Activated naive CD4-positive, alpha-beta T cell treated with anti-CD3 and anti-CD28 coated beads for 36 hours (primary cell): ENCODE measurements at regions of chr12 and their contacts with region 1.

Region 1: DNA sequence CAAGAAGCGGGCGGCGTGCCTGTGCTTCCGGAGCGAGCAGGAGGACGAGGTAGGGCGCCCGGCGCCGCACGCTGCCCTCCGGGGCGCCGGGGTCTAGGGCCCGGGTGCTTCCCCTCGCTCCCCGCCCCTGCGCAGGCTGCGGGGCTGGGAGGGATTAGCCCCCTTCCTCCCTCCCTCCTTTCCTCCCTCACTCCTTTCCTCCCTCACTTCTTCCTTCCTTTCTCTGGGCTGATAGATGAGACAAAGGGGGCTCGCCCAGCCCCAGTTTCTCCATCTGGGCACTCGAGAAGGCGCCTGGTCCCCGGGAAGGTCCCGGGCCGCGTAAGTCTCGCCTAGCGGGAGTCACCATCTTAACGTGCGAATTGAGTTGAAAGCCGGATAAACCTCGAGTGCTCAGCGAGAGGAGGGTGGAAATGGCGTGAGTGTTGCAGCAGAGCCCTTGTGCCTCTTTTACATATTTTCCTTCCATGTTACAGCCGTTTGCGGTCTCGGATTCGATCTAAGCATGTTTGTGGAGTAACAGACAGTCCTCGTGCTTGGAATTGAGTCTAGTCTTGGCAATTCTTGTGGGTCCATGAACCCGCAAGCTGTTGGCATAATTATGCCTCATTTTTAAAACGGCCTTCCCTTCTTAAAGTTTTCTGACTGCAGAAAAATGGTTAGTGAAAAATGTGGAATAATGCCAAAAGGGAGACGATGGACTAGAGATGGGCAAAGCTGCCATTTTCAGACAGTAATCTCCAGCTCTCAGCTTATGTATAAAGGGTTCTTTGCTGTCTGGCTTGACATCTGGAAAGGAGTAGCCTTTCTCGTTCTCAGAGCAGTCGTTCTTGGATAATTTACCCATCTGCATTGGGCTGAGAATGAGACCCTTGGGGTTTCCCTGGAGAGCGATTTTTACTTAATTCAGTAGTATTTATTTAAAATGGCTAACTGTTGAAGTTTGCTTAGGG is 924 bp downstream of the NUDT4 start:
- DNase-seq: peak; percentile 74
- H3K4me3 Mint-ChIP-seq: peak overlapping the region; percentile 99
- H3K27ac Mint-ChIP-seq: peak overlapping the region; percentile 99
- H3K4me1 Mint-ChIP-seq: peaks cover 38% of the 10 kb centered on the region
- H3K27me3 Mint-ChIP-seq: no peaks in the 10 kb centered on the region

Region 2: GRCh38 chr12:92312463-92312964 is 1066.1 kb before region 1 on chr12:
- CTCF ChIA-PET with region 1: no interaction called
- intact Hi-C with region 1: no loop called
- DNase-seq: no peak
- H3K4me3 Mint-ChIP-seq: no peak overlapping the region
- H3K27ac Mint-ChIP-seq: no peak overlapping the region
- H3K4me1 Mint-ChIP-seq: peaks cover 20% of the 10 kb centered on the region
- H3K27me3 Mint-ChIP-seq: no peaks in the 10 kb centered on the region

Region 3: DNA sequence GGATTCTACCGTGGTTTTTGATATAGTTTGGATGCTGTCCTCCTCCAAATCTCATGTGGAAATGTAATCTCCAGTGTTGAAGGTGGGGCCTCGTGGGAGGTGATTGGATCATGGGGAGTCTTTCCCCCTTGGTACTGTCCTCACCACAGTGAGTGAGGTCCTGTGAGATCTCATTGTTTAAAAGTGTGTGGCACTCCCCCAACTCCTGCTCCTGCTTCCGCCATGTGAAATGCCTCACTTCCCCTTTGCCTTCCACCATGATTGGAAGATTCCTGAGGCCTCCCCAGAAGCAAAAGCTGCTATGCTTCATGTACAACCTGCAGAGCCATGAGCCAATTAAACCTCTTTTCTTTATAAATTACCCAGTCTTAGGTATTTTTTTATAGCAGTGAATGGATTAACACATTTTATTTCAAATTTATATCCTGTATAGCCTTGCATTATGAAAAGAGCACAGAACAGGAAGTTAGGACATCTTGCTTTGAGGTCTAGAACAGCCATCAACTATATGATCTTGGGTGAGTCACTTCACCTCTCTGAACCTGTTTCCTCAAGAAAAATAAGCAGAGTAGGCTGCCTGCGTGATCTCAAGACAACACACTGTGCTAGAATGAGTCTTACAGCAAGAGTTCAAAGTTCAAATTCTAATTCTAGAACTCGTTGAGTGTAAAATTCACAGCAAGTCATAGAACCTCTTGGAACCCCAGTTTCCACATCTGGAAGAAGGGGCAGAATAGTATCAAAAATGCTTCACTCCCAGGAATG is 288.7 kb before region 1 on chr12:
- CTCF ChIA-PET with region 1: no interaction called
- intact Hi-C with region 1: loop called (anchors 1 kb)
- DNase-seq: peak; percentile 64
- H3K4me3 Mint-ChIP-seq: no peak overlapping the region
- H3K27ac Mint-ChIP-seq: peak overlapping the region; percentile 68
- H3K4me1 Mint-ChIP-seq: peaks cover 13% of the 10 kb centered on the region
- H3K27me3 Mint-ChIP-seq: no peaks in the 10 kb centered on the region

Region 4: DNA sequence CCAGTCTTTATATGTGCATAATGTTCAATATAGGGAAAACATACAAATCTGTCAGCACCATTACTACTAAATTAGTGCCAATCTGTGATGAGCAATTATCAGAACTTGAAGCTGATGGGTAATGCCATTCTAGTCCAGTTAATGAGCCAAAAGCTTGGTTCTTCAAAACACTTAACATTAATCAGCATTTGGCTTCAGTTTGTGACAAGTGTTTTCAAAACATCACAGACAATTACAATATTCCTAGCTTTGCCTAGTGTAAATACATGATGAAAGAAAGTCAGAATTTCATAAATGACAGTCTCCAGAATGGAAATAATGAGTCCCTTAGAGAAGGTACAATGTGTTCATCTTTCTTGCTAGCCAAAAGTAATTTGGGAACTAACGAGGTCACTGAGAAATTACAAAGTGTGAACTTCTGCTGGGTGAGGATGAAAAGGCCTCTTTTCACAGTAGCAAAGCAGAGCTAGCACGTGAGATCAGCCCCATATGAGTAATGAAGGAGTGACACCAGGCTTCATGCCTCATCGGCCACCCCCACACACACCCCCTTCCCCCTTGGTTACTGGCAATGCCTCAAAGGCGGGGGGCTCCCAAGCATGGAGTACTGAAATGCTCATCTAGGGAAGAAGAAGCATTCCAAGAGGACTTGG is 269.0 kb before region 1 on chr12:
- CTCF ChIA-PET with region 1: no interaction called
- intact Hi-C with region 1: loop called (anchors 1 kb)
- DNase-seq: peak; percentile 83
- H3K4me3 Mint-ChIP-seq: no peak overlapping the region
- H3K27ac Mint-ChIP-seq: peak overlapping the region; percentile 91
- H3K4me1 Mint-ChIP-seq: peaks cover 32% of the 10 kb centered on the region
- H3K27me3 Mint-ChIP-seq: no peaks in the 10 kb centered on the region

Region 5: GRCh38 chr12:93243689-93244513 is 134.7 kb before region 1 on chr12:
- CTCF ChIA-PET with region 1: no interaction called
- intact Hi-C with region 1: loop called (anchors 1 kb)
- DNase-seq: peak; percentile 53
- H3K4me3 Mint-ChIP-seq: peak overlapping the region; percentile 49
- H3K27ac Mint-ChIP-seq: peak overlapping the region; percentile 82
- H3K4me1 Mint-ChIP-seq: peaks cover 34% of the 10 kb centered on the region
- H3K27me3 Mint-ChIP-seq: no peaks in the 10 kb centered on the region

Region 6: DNA sequence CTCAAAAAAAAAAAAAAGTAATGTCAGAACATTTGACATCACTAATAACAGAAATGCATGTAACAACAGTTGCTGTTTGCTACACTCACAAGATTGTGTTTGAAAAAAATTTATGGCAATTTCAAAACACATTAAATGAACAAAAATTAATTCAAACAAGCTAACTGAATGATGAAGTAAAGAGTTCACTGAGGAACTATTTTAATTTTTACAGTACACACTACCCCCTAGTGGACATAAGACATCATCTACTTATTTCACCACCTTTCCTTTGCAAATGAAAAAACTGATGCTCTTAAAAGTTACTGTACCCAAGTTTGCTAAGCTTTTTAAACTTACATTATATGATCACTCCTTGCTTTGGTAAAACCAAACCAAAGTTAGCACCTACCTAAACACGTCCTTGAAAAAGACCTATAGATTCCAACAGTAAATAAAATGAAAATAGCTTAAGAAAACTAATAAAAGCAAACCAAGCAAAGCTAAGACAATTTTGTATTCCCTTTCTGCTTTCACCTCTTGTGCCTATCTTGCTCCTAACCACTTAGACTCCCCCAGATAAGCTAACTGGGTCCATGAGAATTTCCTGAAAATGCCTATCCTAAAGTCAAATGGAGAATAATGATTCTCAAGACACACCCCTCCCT is 40.9 kb after region 1 on chr12:
- CTCF ChIA-PET with region 1: interaction called, 9 read pairs
- intact Hi-C with region 1: loop called (anchors 2 kb)
- DNase-seq: no peak
- H3K4me3 Mint-ChIP-seq: no peak overlapping the region
- H3K27ac Mint-ChIP-seq: no peak overlapping the region
- H3K4me1 Mint-ChIP-seq: peaks cover 88% of the 10 kb centered on the region
- H3K27me3 Mint-ChIP-seq: no peaks in the 10 kb centered on the region

Region 7: GRCh38 chr12:93467351-93468007 is 88.8 kb after region 1 on chr12 and contains the start of gene MRPL42:
- CTCF ChIA-PET with region 1: interaction called, 5 read pairs
- intact Hi-C with region 1: loop called (anchors 1 kb)
- DNase-seq: peak; percentile 95
- H3K4me3 Mint-ChIP-seq: peak within 1 kb of the TSS; percentile 95
- H3K27ac Mint-ChIP-seq: peak within 1 kb of the TSS; percentile 91
- H3K4me1 Mint-ChIP-seq: peaks cover 32% of the 10 kb centered on the region
- H3K27me3 Mint-ChIP-seq: no peaks in the 10 kb centered on the region
- total RNA-seq, gene MRPL42: 93.8 to 95.8 TPM

Region 8: DNA sequence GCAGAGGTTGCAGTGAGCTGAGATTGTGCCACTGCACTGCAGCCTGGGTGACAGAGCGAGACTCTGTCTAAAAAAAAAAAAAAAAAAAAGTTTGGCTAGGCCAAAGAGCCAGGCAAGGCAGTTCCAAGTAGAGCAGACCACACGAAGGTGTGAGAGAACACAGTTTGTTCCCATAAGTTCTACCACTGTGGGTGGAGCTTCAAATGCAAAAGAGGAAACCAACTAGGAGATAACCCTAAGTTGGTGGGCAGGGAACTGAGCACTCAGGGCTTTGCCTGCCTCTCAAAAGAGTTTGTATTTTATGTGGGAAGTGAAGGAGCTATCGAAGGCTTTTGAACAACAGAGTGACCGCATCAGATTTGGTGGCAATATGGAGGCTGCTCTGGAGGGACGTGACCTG is 209.0 kb after region 1 on chr12:
- CTCF ChIA-PET with region 1: no interaction called
- intact Hi-C with region 1: no loop called
- DNase-seq: no peak
- H3K4me3 Mint-ChIP-seq: no peak overlapping the region
- H3K27ac Mint-ChIP-seq: no peak overlapping the region
- H3K4me1 Mint-ChIP-seq: peaks cover 11% of the 10 kb centered on the region
- H3K27me3 Mint-ChIP-seq: peaks cover 33% of the 10 kb centered on the region

Region 9: GRCh38 chr12:93677195-93678064 is 298.8 kb after region 1 on chr12 and contains the start of gene CRADD:
- CTCF ChIA-PET with region 1: no interaction called
- intact Hi-C with region 1: loop called (anchors 2 kb)
- DNase-seq: peak; percentile 92
- H3K4me3 Mint-ChIP-seq: peak within 1 kb of the TSS; percentile 89
- H3K27ac Mint-ChIP-seq: peak within 1 kb of the TSS; percentile 99
- H3K4me1 Mint-ChIP-seq: peaks cover 40% of the 10 kb centered on the region
- H3K27me3 Mint-ChIP-seq: peaks cover 9% of the 10 kb centered on the region
- total RNA-seq, gene CRADD: 14.3 to 15.6 TPM

Region 10: GRCh38 chr12:93879476-93880421 is 501.1 kb after region 1 on chr12:
- CTCF ChIA-PET with region 1: no interaction called
- intact Hi-C with region 1: no loop called
- DNase-seq: no peak
- H3K4me3 Mint-ChIP-seq: no peak overlapping the region
- H3K27ac Mint-ChIP-seq: no peak overlapping the region
- H3K4me1 Mint-ChIP-seq: peaks cover 15% of the 10 kb centered on the region
- H3K27me3 Mint-ChIP-seq: no peaks in the 10 kb centered on the region